ENCODE measurements at regions of chr12 and their contacts with region 1.

Region 1: DNA sequence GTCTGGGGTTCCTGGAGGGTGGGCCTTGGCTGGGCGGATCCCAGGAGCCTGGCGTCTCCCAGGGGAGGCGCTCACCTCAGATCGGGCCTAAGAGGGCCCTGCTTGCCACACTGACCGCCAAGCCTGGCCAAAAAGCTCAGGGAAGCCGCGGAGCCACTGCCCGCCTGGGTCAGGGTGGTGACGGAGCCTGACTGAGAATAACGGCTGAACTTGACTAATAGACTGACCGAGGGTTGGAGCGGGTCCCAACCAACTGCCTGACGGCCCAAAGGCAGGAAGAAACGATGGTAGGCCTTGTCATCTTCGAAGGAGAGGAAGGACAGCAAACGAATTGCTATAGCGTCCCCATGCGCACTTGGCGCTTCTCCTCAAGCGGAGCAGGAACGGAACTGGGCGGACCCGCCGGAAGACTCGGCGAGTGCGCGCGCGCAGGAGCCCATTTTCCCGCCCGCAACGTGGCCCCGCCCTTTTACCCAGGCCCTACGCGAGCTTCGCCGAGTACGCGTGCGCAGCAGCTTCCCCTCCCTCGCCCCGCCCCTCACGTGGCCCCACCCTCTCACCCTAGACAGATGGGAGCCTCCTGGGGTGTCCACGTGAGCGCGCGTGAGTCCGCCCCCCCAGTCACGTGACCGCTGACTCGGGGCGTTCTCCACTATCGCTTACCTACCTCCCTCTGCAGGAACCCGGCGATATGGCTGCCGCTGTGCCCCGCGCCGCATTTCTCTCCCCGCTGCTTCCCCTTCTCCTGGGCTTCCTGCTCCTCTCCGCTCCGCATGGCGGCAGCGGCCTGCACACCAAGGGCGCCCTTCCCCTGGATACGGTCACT is at the starts of genes ERP29 and TMEM116:
- DNase-seq: peak; percentile 98 to 100 (median 99)
- H3K4me3 ChIP-seq: peak within 1 kb of the TSS; percentile 94 to 99
- H3K4me3 Mint-ChIP-seq: peak within 1 kb of the TSS; percentile 87 to 98 (median 94)
- H3K27ac ChIP-seq: peak within 1 kb of the TSS; percentile 97
- H3K27ac Mint-ChIP-seq: peak within 1 kb of the TSS; percentile 96 to 99 (median 99)
- H3K4me1 ChIP-seq: peaks cover 79% of the 10 kb centered on the region
- H3K4me1 Mint-ChIP-seq: peaks cover 39 to 73% (median 56%) of the 10 kb centered on the region in 4 donors
- H3K27me3 ChIP-seq: no peaks in the 10 kb centered on the region
- H3K27me3 Mint-ChIP-seq: no peaks in the 10 kb centered on the region
- total RNA-seq, gene ERP29: 183 to 184 TPM
- total RNA-seq, gene TMEM116: 47.3 to 50.6 TPM

Region 2: DNA sequence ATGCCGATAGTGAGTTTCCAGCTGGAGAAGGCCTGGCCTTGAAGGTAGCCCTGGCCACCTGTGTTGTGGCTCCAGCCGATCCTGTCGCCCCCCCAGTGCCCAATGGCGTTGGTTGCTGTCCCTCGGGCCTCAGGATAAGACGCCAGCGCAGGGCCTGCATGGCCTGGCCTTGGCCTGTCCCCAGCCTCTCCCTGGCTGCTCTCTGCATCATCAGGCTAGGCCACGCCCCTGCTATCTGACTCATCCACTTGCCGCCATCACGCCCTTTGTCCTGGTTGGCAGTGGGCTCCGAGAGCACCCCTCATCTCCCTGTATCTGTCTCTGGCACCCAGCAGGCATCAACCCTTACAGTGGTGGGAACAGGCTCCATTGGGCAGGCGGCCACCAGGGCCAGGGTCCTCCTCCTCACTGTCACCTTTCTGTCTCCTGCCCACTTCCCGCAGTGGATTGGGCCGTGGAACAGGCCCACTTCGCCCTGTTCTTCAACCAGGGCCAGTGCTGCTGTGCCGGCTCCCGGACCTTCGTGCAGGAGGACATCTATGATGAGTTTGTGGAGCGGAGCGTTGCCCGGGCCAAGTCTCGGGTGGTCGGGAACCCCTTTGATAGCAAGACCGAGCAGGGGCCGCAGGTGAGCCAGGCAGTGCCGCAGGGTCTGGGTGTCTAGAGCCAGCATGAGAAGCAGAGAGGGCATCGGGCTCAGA is 220.7 kb before region 1 on chr12:
- CTCF ChIA-PET with region 1: no interaction called
- POLR2A ChIA-PET with region 1: no interaction called
- intact Hi-C with region 1: no loop called
- DNase-seq: no peak
- H3K4me3 ChIP-seq: no peak overlapping the region
- H3K4me3 Mint-ChIP-seq: no peak overlapping the region
- H3K27ac ChIP-seq: no peak overlapping the region
- H3K27ac Mint-ChIP-seq: peak overlapping the region in 1 of 7 donors; percentile 47
- H3K4me1 ChIP-seq: no peaks in the 10 kb centered on the region
- H3K4me1 Mint-ChIP-seq: no peaks in the 10 kb centered on the region
- H3K27me3 ChIP-seq: no peaks in the 10 kb centered on the region
- H3K27me3 Mint-ChIP-seq: no peaks in the 10 kb centered on the region

Region 3: GRCh38 chr12:111907740-111908139 is 105.2 kb before region 1 on chr12:
- CTCF ChIA-PET with region 1: no interaction called
- POLR2A ChIA-PET with region 1: no interaction called
- intact Hi-C with region 1: no loop called
- DNase-seq: no peak
- H3K4me3 ChIP-seq: no peak overlapping the region
- H3K4me3 Mint-ChIP-seq: no peak overlapping the region
- H3K27ac ChIP-seq: no peak overlapping the region
- H3K27ac Mint-ChIP-seq: no peak overlapping the region
- H3K4me1 ChIP-seq: no peaks in the 10 kb centered on the region
- H3K4me1 Mint-ChIP-seq: peaks cover 0 to 8% (median 2%) of the 10 kb centered on the region in 4 donors
- H3K27me3 ChIP-seq: no peaks in the 10 kb centered on the region
- H3K27me3 Mint-ChIP-seq: no peaks in the 10 kb centered on the region

Region 4: GRCh38 chr12:111942557-111942956 is 70.4 kb before region 1 on chr12:
- CTCF ChIA-PET with region 1: interaction called, 85 read pairs
- POLR2A ChIA-PET with region 1: interaction called, 66 read pairs
- intact Hi-C with region 1: loop called (anchors 1 kb)
- DNase-seq: no peak
- H3K4me3 ChIP-seq: no peak overlapping the region
- H3K4me3 Mint-ChIP-seq: no peak overlapping the region
- H3K27ac ChIP-seq: no peak overlapping the region
- H3K27ac Mint-ChIP-seq: peak overlapping the region in 1 of 7 donors; percentile 46
- H3K4me1 ChIP-seq: peaks cover 16% of the 10 kb centered on the region
- H3K4me1 Mint-ChIP-seq: peaks cover 8 to 17% (median 11%) of the 10 kb centered on the region in 4 donors
- H3K27me3 ChIP-seq: no peaks in the 10 kb centered on the region
- H3K27me3 Mint-ChIP-seq: no peaks in the 10 kb centered on the region

Region 5: DNA sequence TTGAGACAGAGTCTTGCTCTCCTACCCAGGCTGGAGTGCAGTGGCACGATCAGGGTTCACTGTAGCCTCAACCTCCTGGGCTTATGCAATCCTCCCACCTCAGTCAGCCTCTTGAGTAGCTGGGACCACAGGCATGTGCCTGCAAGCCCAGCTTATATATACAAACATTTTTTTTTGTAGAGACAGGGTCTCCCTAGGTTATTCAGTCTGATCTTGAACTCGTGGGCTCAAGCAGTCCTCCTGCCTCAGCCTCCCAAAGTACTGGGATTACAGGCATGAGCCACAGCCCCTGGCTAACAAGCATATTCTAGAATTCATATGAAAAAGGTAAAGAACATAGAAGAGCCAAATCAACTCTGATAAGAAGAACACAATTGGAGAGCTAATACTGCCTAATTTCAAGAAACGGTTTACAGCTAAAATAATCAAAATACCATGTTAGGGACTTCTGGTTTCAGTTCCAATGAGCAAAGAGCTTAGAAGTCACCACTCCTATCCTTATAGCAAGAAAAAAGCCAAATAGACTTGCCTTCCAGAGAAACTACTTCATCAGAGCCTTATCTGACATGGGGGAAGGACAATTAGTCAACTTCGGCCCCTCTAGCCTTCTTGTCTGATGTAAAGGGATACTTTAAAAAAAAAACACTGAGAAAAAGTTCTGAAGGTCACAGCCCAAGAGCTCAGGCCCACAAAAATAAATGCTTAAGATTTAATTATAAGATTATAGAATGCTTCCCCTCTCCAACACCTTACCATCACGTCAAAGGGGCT is 37.6 kb before region 1 on chr12:
- CTCF ChIA-PET with region 1: interaction called, 4 read pairs
- POLR2A ChIA-PET with region 1: interaction called, 27 read pairs
- intact Hi-C with region 1: no loop called
- DNase-seq: no peak
- H3K4me3 ChIP-seq: no peak overlapping the region
- H3K4me3 Mint-ChIP-seq: peak overlapping the region in 1 of 8 donors; percentile 52
- H3K27ac ChIP-seq: no peak overlapping the region
- H3K27ac Mint-ChIP-seq: peak overlapping the region in 3 of 7 donors; percentile 46 to 92 (median 77)
- H3K4me1 ChIP-seq: peaks cover 15% of the 10 kb centered on the region
- H3K4me1 Mint-ChIP-seq: peaks cover 21 to 46% (median 36%) of the 10 kb centered on the region in 4 donors
- H3K27me3 ChIP-seq: no peaks in the 10 kb centered on the region
- H3K27me3 Mint-ChIP-seq: no peaks in the 10 kb centered on the region

Region 6: GRCh38 chr12:112025808-112026375 is 12.9 kb after region 1 on chr12:
- CTCF ChIA-PET with region 1: interaction called, 16 read pairs
- POLR2A ChIA-PET with region 1: interaction called, 33 read pairs
- intact Hi-C with region 1: no loop called
- DNase-seq: no peak
- H3K4me3 ChIP-seq: no peak overlapping the region
- H3K4me3 Mint-ChIP-seq: no peak overlapping the region
- H3K27ac ChIP-seq: no peak overlapping the region
- H3K27ac Mint-ChIP-seq: peak overlapping the region; percentile 24 to 92 (median 68)
- H3K4me1 ChIP-seq: peaks cover 15% of the 10 kb centered on the region
- H3K4me1 Mint-ChIP-seq: peaks cover 20 to 21% (median 21%) of the 10 kb centered on the region in 4 donors
- H3K27me3 ChIP-seq: no peaks in the 10 kb centered on the region
- H3K27me3 Mint-ChIP-seq: no peaks in the 10 kb centered on the region

Region 7: DNA sequence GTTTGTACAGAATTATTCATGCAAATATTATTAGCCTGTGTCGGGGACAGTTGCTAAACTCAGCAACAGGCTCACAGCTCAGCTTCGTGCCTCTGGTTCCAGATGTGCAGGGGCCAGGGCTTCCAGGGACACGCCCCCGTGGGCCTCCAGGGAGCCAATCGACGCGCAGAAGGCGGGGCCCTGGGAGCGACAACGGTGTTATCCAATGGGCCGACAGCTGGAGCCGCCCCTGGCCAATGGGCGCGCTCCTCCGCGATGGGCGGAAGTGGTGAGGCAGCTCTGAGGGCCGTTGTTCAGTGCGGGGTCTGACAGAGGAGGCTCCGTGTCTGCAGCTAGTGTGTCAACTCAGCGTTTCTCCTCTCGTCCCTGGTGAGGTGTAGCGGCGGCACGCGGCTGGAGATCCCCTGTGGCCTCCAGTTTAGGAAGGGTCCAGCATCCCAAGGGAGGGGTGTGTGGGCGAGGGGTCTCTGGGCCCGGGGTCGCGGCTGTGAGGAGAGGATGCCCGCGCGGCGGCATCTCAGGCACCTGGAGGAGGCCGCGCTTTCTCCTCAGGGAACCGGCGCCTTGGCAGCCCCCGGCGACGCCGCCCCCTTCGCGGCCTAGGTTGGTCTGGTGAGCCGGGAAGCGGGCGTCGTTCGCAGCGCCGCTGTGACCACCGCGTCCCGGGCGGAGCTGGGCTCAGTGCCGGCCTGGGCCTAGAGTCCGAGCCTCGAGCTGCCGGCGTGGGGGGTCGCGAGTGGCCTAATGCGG is 112.4 kb after region 1 on chr12 and contains the start of gene TRAFD1:
- CTCF ChIA-PET with region 1: interaction called, 6 read pairs
- POLR2A ChIA-PET with region 1: interaction called, 22 read pairs
- intact Hi-C with region 1: loop called (anchors 1 kb)
- DNase-seq: peak; percentile 97 to 99 (median 98)
- H3K4me3 ChIP-seq: peak within 1 kb of the TSS; percentile 63 to 99
- H3K4me3 Mint-ChIP-seq: peak within 1 kb of the TSS; percentile 78 to 93 (median 88)
- H3K27ac ChIP-seq: peak within 1 kb of the TSS; percentile 86
- H3K27ac Mint-ChIP-seq: peak within 1 kb of the TSS; percentile 83 to 95 (median 91)
- H3K4me1 ChIP-seq: peaks cover 52% of the 10 kb centered on the region
- H3K4me1 Mint-ChIP-seq: peaks cover 15 to 50% (median 33%) of the 10 kb centered on the region in 4 donors
- H3K27me3 ChIP-seq: no peaks in the 10 kb centered on the region
- H3K27me3 Mint-ChIP-seq: no peaks in the 10 kb centered on the region
- total RNA-seq, gene TRAFD1: 38.7 to 42.7 TPM

Region 8: DNA sequence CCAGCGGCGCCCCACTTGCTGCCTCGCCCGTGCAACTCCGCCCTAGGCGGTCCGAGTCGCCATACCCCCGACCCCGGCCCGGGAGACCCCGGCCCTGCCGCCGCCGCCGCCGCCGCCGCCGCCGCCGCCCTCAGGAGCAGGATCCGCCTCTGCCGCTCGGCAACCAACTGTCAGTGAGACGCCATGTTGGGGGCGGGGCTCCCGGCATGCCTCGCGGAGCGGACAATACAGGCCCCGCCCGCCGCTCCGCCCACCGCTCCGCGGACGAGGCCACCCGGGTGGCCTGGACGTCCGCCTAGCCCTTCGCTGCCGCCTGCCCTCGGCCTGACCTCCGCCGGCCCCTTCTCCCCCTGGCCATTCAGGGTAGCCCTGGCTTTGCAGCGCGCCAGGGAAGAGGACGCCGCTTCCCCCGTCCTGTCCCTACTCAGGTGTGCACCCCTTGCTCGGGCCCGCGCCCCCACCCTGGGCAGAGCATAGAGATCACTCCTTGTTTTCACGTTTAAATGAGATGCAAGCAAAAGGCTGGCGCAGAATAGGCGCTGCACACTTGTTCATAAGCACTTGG is 369.3 kb after region 1 on chr12 and contains the start of gene HECTD4:
- CTCF ChIA-PET with region 1: no interaction called
- POLR2A ChIA-PET with region 1: no interaction called
- intact Hi-C with region 1: loop called (anchors 5 kb)
- DNase-seq: peak; percentile 87 to 91 (median 88)
- H3K4me3 ChIP-seq: peak within 1 kb of the TSS; percentile 73 to 94
- H3K4me3 Mint-ChIP-seq: peak within 1 kb of the TSS; percentile 92 to 96 (median 96)
- H3K27ac ChIP-seq: peak within 1 kb of the TSS; percentile 59
- H3K27ac Mint-ChIP-seq: peak within 1 kb of the TSS; percentile 86 to 95 (median 94)
- H3K4me1 ChIP-seq: peaks cover 18% of the 10 kb centered on the region
- H3K4me1 Mint-ChIP-seq: peaks cover 18 to 28% (median 24%) of the 10 kb centered on the region in 4 donors
- H3K27me3 ChIP-seq: no peaks in the 10 kb centered on the region
- H3K27me3 Mint-ChIP-seq: peaks cover 0 to under 1% of the 10 kb centered on the region in 2 donors
- total RNA-seq, gene HECTD4: 51.8 to 61.3 TPM